B cell (primary cell): ENCODE measurements at regions of chr6 and their contacts with region 1.

Region 1: GRCh38 chr6:36094753-36095496 is 35.4 kb upstream of the MAPK13 start:
- DNase-seq: peak; percentile 87
- ATAC-seq: peak; percentile 96
- H3K4me3 ChIP-seq: no peak overlapping the region
- H3K4me3 Mint-ChIP-seq: no peak overlapping the region
- H3K27ac ChIP-seq: peak overlapping the region in 1 of 2 donors; percentile 35
- H3K27ac Mint-ChIP-seq: peak overlapping the region; percentile 46
- H3K4me1 ChIP-seq: peaks cover 24 to 26% of the 10 kb centered on the region in 2 donors
- H3K4me1 Mint-ChIP-seq: peaks cover 34% of the 10 kb centered on the region
- H3K27me3 ChIP-seq: no peaks in the 10 kb centered on the region
- H3K27me3 Mint-ChIP-seq: no peaks in the 10 kb centered on the region
- CTCF ChIP-seq: peak; percentile 98

Region 2: DNA sequence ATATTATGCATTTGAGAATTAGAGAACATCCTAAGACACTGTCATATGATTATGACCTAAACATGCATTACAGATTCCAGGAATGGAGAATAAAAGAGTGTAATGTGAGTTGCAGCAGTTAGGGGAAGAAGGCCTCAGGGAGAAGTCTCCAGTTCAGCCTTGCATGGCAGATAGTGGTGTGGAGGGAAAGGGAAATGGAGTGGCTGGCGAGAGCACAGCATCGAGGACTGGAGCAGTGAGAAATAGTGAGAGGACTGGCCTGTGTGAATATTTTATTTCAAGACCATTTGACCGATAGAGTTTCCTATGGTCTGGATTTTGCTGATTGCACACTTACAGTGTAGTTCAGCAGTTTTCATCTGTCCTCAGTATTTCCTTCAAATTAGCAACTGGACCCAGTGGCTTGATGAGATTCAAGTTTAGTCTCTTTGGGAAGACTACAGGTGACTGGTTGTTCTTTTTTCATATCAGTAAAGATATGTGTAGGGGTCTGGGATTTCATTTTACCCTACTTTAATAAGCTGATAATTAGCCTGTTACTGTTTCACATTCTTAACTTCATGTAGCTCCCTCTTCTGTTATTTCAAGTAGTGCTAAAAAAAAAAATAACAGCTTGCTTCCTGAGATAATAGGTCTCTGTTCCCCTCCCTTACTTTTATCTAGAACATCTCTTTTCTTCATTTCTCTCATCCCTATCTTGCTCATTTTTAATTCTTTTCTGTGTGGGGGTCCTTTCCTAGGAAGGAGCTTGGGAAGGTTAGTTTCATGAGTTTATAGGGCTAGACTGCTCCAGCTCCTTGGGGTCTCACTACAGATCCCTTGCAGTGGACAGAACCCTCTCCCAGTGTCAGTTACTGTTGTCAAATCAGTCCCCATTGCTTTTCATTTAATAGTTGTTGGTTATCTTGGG is 1275.1 kb before region 1 on chr6:
- CTCF ChIA-PET with region 1: no interaction called
- POLR2A ChIA-PET with region 1: no interaction called
- intact Hi-C with region 1: no loop called
- DNase-seq: no peak
- ATAC-seq: no peak
- H3K4me3 ChIP-seq: no peak overlapping the region
- H3K4me3 Mint-ChIP-seq: no peak overlapping the region
- H3K27ac ChIP-seq: no peak overlapping the region
- H3K27ac Mint-ChIP-seq: no peak overlapping the region
- H3K4me1 ChIP-seq: peaks cover 4 to 8% of the 10 kb centered on the region in 2 donors
- H3K4me1 Mint-ChIP-seq: peaks cover 29% of the 10 kb centered on the region
- H3K27me3 ChIP-seq: no peaks in the 10 kb centered on the region
- H3K27me3 Mint-ChIP-seq: no peaks in the 10 kb centered on the region
- CTCF ChIP-seq: no peak

Region 3: DNA sequence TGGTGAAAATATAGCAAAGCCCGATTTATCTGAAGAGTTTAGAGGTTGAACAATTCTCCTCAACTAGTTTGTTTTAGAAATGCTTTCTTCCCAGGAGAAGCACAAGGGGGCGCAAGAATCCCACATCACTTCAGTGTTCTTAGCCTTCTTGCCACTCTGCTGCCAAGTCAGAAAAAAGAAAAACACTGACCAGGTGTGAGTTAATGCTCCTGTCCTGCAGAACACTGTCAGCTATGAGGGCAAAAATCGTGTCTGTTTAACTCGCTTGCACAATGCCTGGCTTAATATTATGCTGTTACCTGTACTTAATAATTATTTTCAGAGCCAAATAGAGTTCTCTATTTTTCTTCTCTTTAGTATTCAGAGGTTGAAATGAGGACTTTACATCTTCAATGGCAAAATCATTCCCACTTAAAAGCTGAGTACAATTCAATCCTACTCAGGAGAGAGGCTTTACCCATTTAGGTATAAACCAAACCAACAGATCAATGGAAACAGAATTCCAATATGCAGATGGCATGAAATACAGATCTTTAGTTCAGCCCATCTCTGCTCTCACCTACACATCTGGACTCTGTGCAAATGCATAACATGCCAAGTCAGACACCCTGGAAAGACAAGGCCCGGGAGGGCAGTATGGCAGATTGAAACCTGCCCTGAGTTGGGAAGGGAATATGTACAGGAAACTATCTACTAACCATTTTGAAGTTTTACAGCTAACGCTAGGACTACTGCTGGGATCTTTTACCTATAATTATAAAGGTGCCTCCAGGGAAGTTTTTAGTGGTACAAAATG is 510.8 kb before region 1 on chr6:
- CTCF ChIA-PET with region 1: interaction called, 5 read pairs
- POLR2A ChIA-PET with region 1: no interaction called
- intact Hi-C with region 1: loop called (anchors 10 kb)
- DNase-seq: peak; percentile 82
- ATAC-seq: peak; percentile 63
- H3K4me3 ChIP-seq: no peak overlapping the region
- H3K4me3 Mint-ChIP-seq: no peak overlapping the region
- H3K27ac ChIP-seq: no peak overlapping the region
- H3K27ac Mint-ChIP-seq: no peak overlapping the region
- H3K4me1 ChIP-seq: no peaks in the 10 kb centered on the region
- H3K4me1 Mint-ChIP-seq: peaks cover 5% of the 10 kb centered on the region
- H3K27me3 ChIP-seq: no peaks in the 10 kb centered on the region
- H3K27me3 Mint-ChIP-seq: no peaks in the 10 kb centered on the region
- CTCF ChIP-seq: peak; percentile 91

Region 4: DNA sequence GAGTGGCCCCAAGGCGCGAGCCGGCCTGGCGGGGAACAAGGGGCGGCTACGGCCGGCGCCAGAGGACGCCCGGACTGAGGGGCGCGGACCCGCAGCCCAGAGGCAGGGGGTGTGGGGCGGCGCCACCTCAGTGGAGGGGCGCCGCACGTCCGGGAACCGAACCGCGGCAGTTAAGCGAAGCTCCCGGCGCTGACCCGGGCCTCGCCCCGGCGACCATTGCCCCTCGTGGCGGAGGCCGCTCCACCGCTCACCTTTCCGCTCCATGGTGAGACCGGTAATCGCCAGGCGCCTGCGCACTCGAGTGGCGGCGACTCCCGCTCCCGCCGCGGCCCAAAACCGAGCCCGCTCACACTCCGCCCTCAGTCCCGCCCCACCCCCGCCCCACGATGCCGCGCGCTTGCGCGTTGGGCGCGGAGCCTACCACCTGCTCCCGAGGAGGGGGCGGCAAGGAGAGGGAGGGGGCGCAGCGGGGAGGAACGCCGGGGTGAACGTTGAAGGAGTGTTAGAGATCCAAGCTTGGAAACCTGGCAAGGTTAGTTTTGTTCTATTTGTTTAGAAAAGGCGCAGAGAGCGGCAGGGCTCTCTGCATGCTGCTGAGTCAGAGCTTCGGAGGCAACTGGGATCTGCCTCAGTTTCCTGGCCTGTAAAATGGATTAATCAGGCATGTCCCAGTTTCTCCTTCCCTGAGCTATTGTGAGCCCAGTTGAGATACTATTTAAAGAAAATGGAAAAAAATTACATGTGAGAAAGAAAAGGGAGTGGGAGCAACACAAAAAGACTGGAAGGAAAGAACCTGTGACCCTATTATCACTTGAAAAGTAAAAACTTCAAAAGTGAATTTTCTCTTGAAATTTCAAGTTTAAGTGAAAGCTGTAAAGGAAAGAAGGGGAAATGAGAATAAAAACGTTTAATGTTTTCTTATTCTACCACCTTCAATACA is 173.9 kb before region 1 on chr6 and contains the start of gene SRPK1:
- CTCF ChIA-PET with region 1: interaction called, 5 read pairs
- POLR2A ChIA-PET with region 1: no interaction called
- intact Hi-C with region 1: loop called (anchors 10 kb)
- DNase-seq: peak; percentile 91
- ATAC-seq: peak; percentile 87
- H3K4me3 ChIP-seq: peak within 1 kb of the TSS; percentile 68 to 95 (median 82)
- H3K4me3 Mint-ChIP-seq: peak within 1 kb of the TSS; percentile 96
- H3K27ac ChIP-seq: peak within 1 kb of the TSS; percentile 26 to 62
- H3K27ac Mint-ChIP-seq: peak within 1 kb of the TSS; percentile 88
- H3K4me1 ChIP-seq: peaks cover 19 to 25% of the 10 kb centered on the region in 2 donors
- H3K4me1 Mint-ChIP-seq: peaks cover 29% of the 10 kb centered on the region
- H3K27me3 ChIP-seq: no peaks in the 10 kb centered on the region
- H3K27me3 Mint-ChIP-seq: no peaks in the 10 kb centered on the region
- CTCF ChIP-seq: no peak
- total RNA-seq, gene SRPK1: 53.3 and 61.9 TPM in 2 replicates

Region 5: DNA sequence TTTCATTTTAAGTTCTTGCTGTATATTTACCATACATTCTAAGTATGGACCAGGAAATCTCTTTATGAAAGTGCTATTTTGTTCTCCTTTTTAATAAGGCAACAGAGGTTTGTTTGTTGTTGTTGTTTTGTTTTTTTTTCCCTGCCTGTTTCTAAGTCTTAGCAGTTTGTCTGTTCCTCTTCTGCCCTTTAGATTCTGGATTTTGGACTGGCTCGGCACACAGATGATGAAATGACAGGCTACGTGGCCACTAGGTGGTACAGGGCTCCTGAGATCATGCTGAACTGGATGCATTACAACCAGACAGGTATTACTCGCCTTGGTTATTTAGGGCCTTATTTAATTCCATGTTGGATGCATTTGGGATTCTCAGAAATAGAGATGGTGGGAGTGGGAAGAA is 19.3 kb before region 1 on chr6:
- CTCF ChIA-PET with region 1: interaction called, 15 read pairs
- POLR2A ChIA-PET with region 1: no interaction called
- intact Hi-C with region 1: no loop called
- DNase-seq: peak; percentile 35
- ATAC-seq: no peak
- H3K4me3 ChIP-seq: no peak overlapping the region
- H3K4me3 Mint-ChIP-seq: no peak overlapping the region
- H3K27ac ChIP-seq: no peak overlapping the region
- H3K27ac Mint-ChIP-seq: peak overlapping the region; percentile 8
- H3K4me1 ChIP-seq: no peaks in the 10 kb centered on the region
- H3K4me1 Mint-ChIP-seq: peaks cover 7% of the 10 kb centered on the region
- H3K27me3 ChIP-seq: no peaks in the 10 kb centered on the region
- H3K27me3 Mint-ChIP-seq: no peaks in the 10 kb centered on the region
- CTCF ChIP-seq: peak; percentile 47

Region 6: GRCh38 chr6:36114798-36115408 is 20.0 kb after region 1 on chr6:
- CTCF ChIA-PET with region 1: interaction called, 20 read pairs
- POLR2A ChIA-PET with region 1: no interaction called
- intact Hi-C with region 1: no loop called
- DNase-seq: peak; percentile 78
- ATAC-seq: peak; percentile 60
- H3K4me3 ChIP-seq: peak overlapping the region in 4 of 5 experiments; percentile 7 to 41 (median 20)
- H3K4me3 Mint-ChIP-seq: peak overlapping the region; percentile 77
- H3K27ac ChIP-seq: peak overlapping the region; percentile 75 to 83
- H3K27ac Mint-ChIP-seq: peak overlapping the region; percentile 92
- H3K4me1 ChIP-seq: peaks cover 92 to 93% of the 10 kb centered on the region in 2 donors
- H3K4me1 Mint-ChIP-seq: peaks cover 89% of the 10 kb centered on the region
- H3K27me3 ChIP-seq: no peaks in the 10 kb centered on the region
- H3K27me3 Mint-ChIP-seq: no peaks in the 10 kb centered on the region
- CTCF ChIP-seq: no peak

Region 7: DNA sequence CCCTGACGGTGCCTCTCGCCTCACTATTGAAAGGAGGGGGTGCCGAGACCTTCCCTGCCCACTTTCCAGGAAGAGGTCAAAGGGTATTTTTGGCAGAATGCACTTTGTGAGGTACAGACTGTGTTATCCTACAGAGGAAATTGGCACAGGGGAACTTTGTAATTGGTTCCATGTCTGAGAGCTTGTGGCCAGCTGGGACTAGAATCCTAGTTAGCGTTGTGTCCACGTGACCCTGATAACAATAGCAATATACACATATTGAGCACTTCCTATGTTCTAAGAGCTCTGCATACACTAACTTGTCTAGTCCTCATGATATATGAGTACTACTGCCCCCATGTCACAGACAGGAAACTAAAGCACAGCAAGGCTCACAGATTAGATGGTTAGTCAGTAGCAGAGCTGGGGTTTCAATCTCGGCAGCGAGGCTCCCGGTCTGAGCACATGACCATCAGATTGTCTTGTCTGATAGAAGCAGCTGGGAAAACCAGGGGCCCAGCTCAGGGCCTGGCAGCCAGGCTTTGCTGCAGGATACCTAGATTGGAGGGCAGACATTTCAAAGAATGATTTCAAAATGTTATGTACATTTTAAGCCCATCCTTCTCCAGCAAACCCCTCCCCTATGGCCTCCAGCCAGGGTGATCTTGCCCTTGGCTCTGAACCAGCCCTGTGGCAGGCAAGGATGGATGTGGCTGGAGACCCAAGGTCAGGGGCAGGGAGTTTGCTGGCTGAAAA is 36.8 kb after region 1 on chr6:
- CTCF ChIA-PET with region 1: interaction called, 24 read pairs
- POLR2A ChIA-PET with region 1: no interaction called
- intact Hi-C with region 1: loop called (anchors 2 kb)
- DNase-seq: peak; percentile 49
- ATAC-seq: peak; percentile 40
- H3K4me3 ChIP-seq: peak overlapping the region; percentile 19 to 78 (median 65)
- H3K4me3 Mint-ChIP-seq: peak overlapping the region; percentile 92
- H3K27ac ChIP-seq: peak overlapping the region; percentile 73 to 74
- H3K27ac Mint-ChIP-seq: peak overlapping the region; percentile 92
- H3K4me1 ChIP-seq: peaks cover 28 to 43% of the 10 kb centered on the region in 2 donors
- H3K4me1 Mint-ChIP-seq: peaks cover 56% of the 10 kb centered on the region
- H3K27me3 ChIP-seq: no peaks in the 10 kb centered on the region
- H3K27me3 Mint-ChIP-seq: no peaks in the 10 kb centered on the region
- CTCF ChIP-seq: no peak

Region 8: GRCh38 chr6:36373368-36374019 is 278.6 kb after region 1 on chr6:
- CTCF ChIA-PET with region 1: no interaction called
- POLR2A ChIA-PET with region 1: no interaction called
- intact Hi-C with region 1: no loop called
- DNase-seq: no peak
- ATAC-seq: no peak
- H3K4me3 ChIP-seq: no peak overlapping the region
- H3K4me3 Mint-ChIP-seq: no peak overlapping the region
- H3K27ac ChIP-seq: no peak overlapping the region
- H3K27ac Mint-ChIP-seq: no peak overlapping the region
- H3K4me1 ChIP-seq: peaks cover 0 to 1% of the 10 kb centered on the region in 2 donors
- H3K4me1 Mint-ChIP-seq: peaks cover 8% of the 10 kb centered on the region
- H3K27me3 ChIP-seq: no peaks in the 10 kb centered on the region
- H3K27me3 Mint-ChIP-seq: peaks cover 8% of the 10 kb centered on the region
- CTCF ChIP-seq: no peak